ENCODE measurements at regions of chr4 and their contacts with region 1.

Region 1: DNA sequence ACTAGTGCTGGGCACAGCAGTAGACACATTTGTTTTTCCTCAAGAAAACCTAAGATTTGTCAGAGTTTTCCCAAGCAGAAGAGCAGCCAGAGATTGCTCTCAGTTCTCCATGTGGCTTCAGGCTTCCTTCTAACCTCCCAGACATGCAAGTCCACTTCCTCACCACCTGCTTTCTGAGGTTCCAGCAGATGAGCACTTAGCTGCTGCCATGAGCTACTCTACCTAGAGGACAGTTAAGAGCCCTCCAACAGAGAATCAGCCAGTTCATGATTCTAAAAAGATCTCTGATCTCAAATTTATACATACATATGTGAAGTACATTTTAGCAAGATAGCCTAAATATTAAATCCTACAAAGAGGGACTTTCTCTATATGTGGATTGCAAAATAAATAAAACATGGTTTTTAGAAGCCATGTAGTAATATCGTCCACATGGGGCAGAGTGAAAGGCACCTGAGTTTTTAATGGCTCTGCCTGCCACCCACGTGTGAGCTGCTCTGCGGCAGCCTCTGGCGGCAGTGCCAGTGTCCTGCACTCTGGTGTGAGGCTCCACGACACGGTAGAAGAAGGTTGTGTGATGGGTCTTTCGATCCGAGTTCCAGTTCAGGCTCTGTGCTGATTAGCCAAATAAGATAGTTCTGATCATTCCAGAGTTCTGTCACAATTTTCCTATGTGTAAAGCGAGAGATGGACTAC is 10.3 kb downstream of the CYP4V2 start:
- DNase-seq: peak; percentile 83
- H3K4me3 ChIP-seq: no peak overlapping the region
- H3K27ac ChIP-seq: peak overlapping the region; percentile 33
- H3K4me1 ChIP-seq: peaks cover 6% of the 10 kb centered on the region
- CTCF ChIP-seq: peak; percentile 98

Region 2: DNA sequence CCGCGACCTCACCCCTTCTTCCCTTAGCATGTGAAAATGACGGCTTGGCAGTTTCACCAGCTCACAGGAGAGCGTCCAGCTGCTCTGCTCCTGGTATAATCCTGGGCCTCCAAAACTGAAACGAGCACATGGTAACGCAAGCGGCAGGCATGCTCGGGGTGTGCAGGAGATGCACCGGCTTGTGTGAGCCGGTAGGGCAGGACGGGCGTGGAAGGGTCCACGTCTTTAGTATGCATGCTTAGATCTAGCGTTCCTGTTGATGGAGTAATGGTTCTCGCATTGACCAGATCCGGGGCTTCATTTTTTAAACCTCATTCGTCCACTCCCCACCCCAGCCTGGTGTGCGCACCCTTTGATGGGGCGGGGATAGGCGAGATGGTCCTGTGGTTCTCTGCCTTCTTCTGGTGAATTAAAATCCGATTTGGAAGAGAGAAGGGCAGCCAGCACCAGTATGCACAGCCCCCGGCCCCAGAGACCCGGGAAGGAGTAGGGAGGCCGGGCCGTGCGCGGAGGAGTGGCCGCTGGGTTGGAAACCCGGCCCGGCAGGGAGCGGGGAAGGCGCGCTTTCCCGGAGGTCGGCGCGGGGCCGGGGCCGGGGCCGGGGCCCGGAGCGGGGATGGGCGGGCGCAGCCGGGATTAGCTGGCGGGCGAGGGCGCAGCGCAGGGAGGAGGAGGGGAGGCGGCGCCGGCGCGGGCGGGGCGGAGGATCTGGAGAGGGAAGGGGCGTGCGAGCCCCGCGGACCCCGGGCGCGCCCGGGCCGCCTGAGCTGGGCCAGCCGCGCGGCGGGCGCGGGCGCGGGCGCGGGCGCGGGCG is 57.3 kb before region 1 on chr4:
- CTCF ChIA-PET with region 1: no interaction called
- POLR2A ChIA-PET with region 1: no interaction called
- intact Hi-C with region 1: loop called (anchors 1 kb)
- DNase-seq: no peak
- H3K4me3 ChIP-seq: no peak overlapping the region
- H3K27ac ChIP-seq: no peak overlapping the region
- H3K4me1 ChIP-seq: no peaks in the 10 kb centered on the region
- CTCF ChIP-seq: no peak

Measured in OCI-LY7 (cell line).